HEK293 (cell line): ENCODE measurements at regions of chr4 and their contacts with region 1.

Region 1: DNA sequence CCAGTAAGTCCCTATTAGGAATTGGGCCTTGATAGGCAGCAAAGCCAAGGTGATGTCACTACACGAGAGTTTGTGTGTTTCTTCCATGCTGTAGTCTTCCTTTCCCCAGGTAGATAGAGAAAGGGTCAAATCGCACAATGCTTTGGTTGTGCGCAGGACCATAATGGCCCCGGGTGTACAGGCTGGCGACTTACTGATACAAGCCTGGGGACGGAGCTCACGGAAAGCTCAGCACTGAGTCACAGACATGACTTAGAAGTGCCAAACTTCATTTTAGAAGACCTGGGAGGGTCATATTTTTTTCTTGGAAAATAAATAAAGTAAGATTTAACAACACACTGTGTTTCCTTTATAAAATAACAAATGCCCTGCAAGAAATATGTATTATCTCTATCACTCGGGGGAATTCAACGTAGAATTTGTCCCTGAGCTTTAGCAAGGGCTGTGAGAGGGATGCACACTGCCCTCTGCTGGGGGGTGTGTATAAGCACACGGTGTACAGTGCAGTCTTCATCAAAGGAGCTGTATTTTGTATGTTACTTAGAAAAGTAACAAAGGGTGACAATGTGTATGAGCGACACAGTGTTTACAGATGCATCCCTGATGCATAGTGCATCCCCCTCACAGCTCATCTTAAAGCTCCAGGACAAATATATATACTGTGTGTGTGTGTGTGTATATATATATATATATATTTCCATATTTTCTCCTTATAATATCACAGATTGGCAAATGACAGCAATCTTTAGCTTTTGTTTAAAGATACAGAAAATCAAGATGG is 254.5 kb upstream of the VEGFC start:
- H3K4me3 ChIP-seq: no peak overlapping the region
- H3K27ac ChIP-seq: no peak overlapping the region
- H3K4me1 ChIP-seq: no peaks in the 10 kb centered on the region
- CTCF ChIP-seq: no peak

Region 2: DNA sequence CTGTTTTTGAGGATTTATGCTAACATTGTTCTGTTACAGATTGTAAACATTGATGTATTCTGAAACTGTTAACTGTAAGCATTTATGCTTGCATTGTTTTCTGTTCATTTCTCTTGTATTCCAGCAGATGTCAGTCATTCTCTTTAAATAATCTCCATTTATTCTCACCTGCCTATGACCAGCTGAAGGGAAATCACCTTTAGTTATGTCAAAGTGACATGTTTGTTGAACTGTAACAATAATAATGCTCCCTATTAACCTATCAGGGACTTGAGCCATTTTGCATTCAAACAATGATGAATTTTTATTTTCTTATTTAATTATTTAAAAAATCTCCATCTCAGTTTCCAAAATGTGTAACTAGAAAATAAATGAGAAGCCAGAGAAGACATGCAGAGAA is 669.5 kb before region 1 on chr4:
- CTCF ChIA-PET with region 1: interaction called, 27 read pairs
- POLR2A ChIA-PET with region 1: no interaction called
- H3K4me3 ChIP-seq: no peak overlapping the region
- H3K27ac ChIP-seq: no peak overlapping the region
- H3K4me1 ChIP-seq: no peaks in the 10 kb centered on the region
- CTCF ChIP-seq: no peak

Region 3: GRCh38 chr4:176789955-176790354 is 257.3 kb before region 1 on chr4:
- CTCF ChIA-PET with region 1: interaction called, 10 read pairs
- POLR2A ChIA-PET with region 1: no interaction called
- H3K4me3 ChIP-seq: no peak overlapping the region
- H3K27ac ChIP-seq: no peak overlapping the region
- H3K4me1 ChIP-seq: peaks cover 3% of the 10 kb centered on the region; the same call in 1 of the 2 replicates
- CTCF ChIP-seq: no peak

Region 4: GRCh38 chr4:176805155-176805554 is 242.1 kb before region 1 on chr4:
- CTCF ChIA-PET with region 1: no interaction called
- POLR2A ChIA-PET with region 1: no interaction called
- H3K4me3 ChIP-seq: no peak overlapping the region
- H3K27ac ChIP-seq: no peak overlapping the region
- H3K4me1 ChIP-seq: no peaks in the 10 kb centered on the region
- CTCF ChIP-seq: no peak

Region 5: DNA sequence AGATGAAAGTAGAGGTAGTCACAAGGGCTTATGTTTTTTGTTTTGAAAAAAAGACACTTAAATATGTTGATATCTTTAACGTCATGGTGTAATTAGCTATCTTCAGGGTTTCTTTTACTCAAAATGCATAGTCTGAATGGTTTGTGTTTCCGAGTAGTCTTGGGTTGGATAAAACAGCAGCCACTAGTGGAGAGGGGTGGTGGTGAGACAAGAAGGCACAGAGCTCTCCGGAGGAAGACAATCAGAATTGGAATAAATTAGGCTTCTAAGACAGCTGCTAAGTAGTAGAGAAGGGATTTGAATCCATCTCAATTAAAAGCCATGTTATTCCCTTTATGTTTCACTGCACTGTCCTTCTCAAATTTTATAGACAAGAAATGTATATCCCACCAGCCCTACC is 14.1 kb before region 1 on chr4:
- CTCF ChIA-PET with region 1: interaction called, 19 read pairs
- POLR2A ChIA-PET with region 1: no interaction called
- H3K4me3 ChIP-seq: no peak overlapping the region
- H3K27ac ChIP-seq: no peak overlapping the region
- H3K4me1 ChIP-seq: no peaks in the 10 kb centered on the region
- CTCF ChIP-seq: no peak

Region 6: GRCh38 chr4:177737387-177737965 is 690.2 kb after region 1 on chr4:
- CTCF ChIA-PET with region 1: no interaction called
- POLR2A ChIA-PET with region 1: no interaction called
- H3K4me3 ChIP-seq: no peak overlapping the region
- H3K27ac ChIP-seq: no peak overlapping the region
- H3K4me1 ChIP-seq: no peaks in the 10 kb centered on the region
- CTCF ChIP-seq: no peak